GM12878 (cell line): ENCODE measurements at regions of chr5 and their contacts with region 1.

Region 1: GRCh38 chr5:88785391-88786219 is 97.4 kb downstream of the MEF2C start:
- DNase-seq: peak; percentile 43
- ATAC-seq: peak; percentile 79
- H3K4me3 ChIP-seq: 0 out of 2 replicates have a peak overlapping the region, but pooled peaks have one; percentile 11
- H3K27ac ChIP-seq: peak overlapping the region; percentile 65
- H3K4me1 ChIP-seq: peaks cover 7% of the 10 kb centered on the region; the same call in 1 of the 2 replicates
- H3K27me3 ChIP-seq: no peaks in the 10 kb centered on the region
- CTCF ChIP-seq: no peak
- EP300 ChIP-seq: peak in 1 of 2 experiments; percentile 61; a peak in 3 of 4 replicates
- POLR2A ChIP-seq: no peak
- RAD21 ChIP-seq: no peak

Region 2: DNA sequence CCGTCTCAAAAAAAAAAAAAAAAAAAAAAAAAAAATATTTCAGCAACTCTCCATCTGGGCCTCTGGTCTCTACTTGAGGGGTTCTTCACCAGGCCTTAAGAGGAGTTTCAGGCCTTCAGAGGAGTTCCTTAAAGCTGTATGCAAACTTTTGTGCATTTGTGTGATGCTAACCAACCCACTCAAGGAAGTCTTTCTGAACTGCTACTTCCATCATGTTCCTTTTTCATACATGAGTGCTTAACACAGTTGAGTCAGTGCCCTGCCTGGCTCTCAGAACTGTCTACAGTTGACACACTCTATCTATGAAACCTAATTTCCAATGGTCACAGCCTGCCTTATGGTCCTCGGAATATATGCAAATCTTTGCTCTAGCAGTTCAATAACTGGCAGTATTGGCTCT is 49.1 kb before region 1 on chr5:
- CTCF ChIA-PET with region 1: interaction called, 3 read pairs
- POLR2A ChIA-PET with region 1: interaction called, 3 read pairs
- RAD21 ChIA-PET with region 1: interaction called, 15 read pairs
- SMC1A ChIA-PET with region 1: interaction called, 65 read pairs
- in situ Hi-C with region 1: no loop called
- intact Hi-C with region 1: loop called (anchors 2 kb)
- DNase-seq: peak; percentile 71
- ATAC-seq: peak; percentile 33
- H3K4me3 ChIP-seq: no peak overlapping the region
- H3K27ac ChIP-seq: peak overlapping the region; percentile 78
- H3K4me1 ChIP-seq: peaks cover 69% of the 10 kb centered on the region
- H3K27me3 ChIP-seq: no peaks in the 10 kb centered on the region
- CTCF ChIP-seq: no peak
- EP300 ChIP-seq: 0 out of 4 replicates have a peak, but pooled peaks of 1 of the 2 experiments have one; percentile 14
- POLR2A ChIP-seq: 0 out of 2 replicates have a peak, but pooled peaks have one; percentile 23
- RAD21 ChIP-seq: no peak

Region 3: DNA sequence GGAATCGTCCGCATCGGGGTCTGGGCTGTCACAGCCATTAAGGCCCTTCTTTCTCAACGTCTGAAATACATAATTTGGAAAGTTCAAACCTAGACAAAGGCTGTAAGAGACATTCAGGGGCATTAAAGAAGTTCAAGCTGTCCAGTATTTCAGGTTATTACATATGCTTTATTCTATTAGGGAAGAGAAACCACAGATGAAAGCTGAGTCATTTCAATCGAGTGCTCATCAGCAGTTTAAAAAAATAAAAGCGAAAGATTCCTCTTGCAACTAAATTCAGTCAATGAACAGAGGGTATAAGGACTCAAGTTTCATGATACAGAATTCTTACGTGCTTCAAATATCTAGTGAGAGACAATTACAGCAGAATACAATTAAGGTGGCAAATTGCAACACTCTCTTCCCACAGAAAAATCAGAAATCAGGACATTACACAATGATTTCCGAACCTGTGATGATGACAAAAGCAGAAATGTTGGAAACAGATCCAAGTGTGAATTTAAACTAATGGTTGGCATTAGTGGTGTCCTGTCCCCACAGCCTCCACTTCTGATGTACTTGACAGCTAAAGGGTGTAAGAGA is 24.2 kb before region 1 on chr5:
- CTCF ChIA-PET with region 1: interaction called, 3 read pairs
- POLR2A ChIA-PET with region 1: interaction called, 6 read pairs
- RAD21 ChIA-PET with region 1: interaction called, 12 read pairs
- SMC1A ChIA-PET with region 1: interaction called, 9 read pairs
- in situ Hi-C with region 1: no loop called
- intact Hi-C with region 1: no loop called
- DNase-seq: no peak
- ATAC-seq: peak; percentile 67
- H3K4me3 ChIP-seq: no peak overlapping the region
- H3K27ac ChIP-seq: peak overlapping the region; percentile 17; the same call in 1 of the 2 replicates
- H3K4me1 ChIP-seq: peaks cover 11% of the 10 kb centered on the region
- H3K27me3 ChIP-seq: no peaks in the 10 kb centered on the region
- CTCF ChIP-seq: no peak
- EP300 ChIP-seq: no peak
- POLR2A ChIP-seq: no peak
- RAD21 ChIP-seq: no peak

Region 4: GRCh38 chr5:88808153-88808552 is 22.5 kb after region 1 on chr5:
- CTCF ChIA-PET with region 1: interaction called, 7 read pairs
- POLR2A ChIA-PET with region 1: interaction called, 4 read pairs
- RAD21 ChIA-PET with region 1: interaction called, 4 read pairs
- SMC1A ChIA-PET with region 1: interaction called, 99 read pairs
- in situ Hi-C with region 1: no loop called
- intact Hi-C with region 1: no loop called
- DNase-seq: no peak
- ATAC-seq: peak; percentile 59
- H3K4me3 ChIP-seq: no peak overlapping the region
- H3K27ac ChIP-seq: no peak overlapping the region
- H3K4me1 ChIP-seq: peaks cover 12% of the 10 kb centered on the region
- H3K27me3 ChIP-seq: no peaks in the 10 kb centered on the region
- CTCF ChIP-seq: no peak
- EP300 ChIP-seq: no peak
- POLR2A ChIP-seq: no peak
- RAD21 ChIP-seq: no peak